AG04450 (cell line): ENCODE measurements at regions of chr19 and their contacts with region 1.

Region 1: GRCh38 chr19:48492925-48493717 is 18.5 kb downstream of the LMTK3 start:
- DNase-seq: peak; percentile 91
- H3K4me3 ChIP-seq: peak overlapping the region; percentile 69
- H3K27ac ChIP-seq: peak overlapping the region; percentile 31
- H3K27me3 ChIP-seq: peaks cover 4% of the 10 kb centered on the region
- CTCF ChIP-seq: no peak

Region 2: GRCh38 chr19:48469289-48469881 is 23.7 kb before region 1 on chr19 and contains the start of gene CYTH2:
- CTCF ChIA-PET with region 1: interaction called, 12 read pairs
- POLR2A ChIA-PET with region 1: interaction called, 3 read pairs
- DNase-seq: peak; percentile 20
- H3K4me3 ChIP-seq: peak within 1 kb of the TSS; percentile 86
- H3K27ac ChIP-seq: peak within 1 kb of the TSS; percentile 97
- H3K27me3 ChIP-seq: no peaks in the 10 kb centered on the region
- CTCF ChIP-seq: no peak
- polyA plus RNA-seq, gene CYTH2: 29.3 and 35.6 TPM in 2 replicates

Region 3: DNA sequence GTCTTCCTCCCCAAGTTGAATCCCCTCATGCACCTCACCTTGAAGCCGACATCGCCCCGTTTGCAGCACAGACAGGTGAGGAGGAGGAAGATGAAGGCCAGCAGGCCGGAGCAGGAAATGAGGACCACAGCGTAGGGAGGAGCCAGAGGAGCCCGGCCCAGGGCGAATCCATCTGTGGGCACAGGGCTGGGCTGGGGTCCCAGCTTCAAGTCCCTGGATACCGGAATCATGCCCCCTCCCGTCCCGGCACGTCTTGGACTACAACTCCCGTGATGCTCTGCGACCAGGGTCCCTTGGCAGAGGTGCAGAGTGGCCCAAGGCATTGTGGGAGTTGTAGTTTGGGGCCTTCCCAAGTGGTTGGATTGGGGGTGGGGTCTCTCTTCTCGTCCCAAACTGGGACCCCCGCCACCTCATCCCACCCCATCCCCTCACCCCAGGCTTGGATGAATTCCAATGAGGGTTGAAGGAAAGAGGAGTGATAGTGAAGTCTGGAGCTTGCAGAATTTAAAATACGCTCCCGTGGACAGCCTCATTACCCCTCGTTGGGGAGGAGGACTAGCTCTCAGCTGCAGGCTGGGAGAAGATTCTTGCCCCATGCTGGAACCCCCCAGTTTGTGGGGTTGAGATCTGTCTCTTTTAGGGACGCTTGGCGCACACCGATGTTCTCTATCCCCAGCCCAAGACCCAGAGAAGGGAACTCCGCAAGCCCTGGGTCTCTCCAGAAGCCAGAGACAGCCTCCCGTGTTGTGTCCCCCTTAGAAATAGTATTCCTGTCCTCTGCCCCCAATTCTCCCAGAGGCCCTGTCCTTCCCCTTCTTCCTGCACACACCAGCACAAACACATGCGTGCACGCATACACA is 17.5 kb after region 1 on chr19:
- CTCF ChIA-PET with region 1: interaction called, 10 read pairs
- POLR2A ChIA-PET with region 1: no interaction called
- DNase-seq: no peak
- H3K4me3 ChIP-seq: peak overlapping the region; percentile 39
- H3K27ac ChIP-seq: no peak overlapping the region
- H3K27me3 ChIP-seq: peaks cover 36% of the 10 kb centered on the region
- CTCF ChIP-seq: no peak

Region 4: GRCh38 chr19:48608798-48609263 is 115.7 kb after region 1 on chr19:
- CTCF ChIA-PET with region 1: interaction called, 13 read pairs
- POLR2A ChIA-PET with region 1: interaction called, 15 read pairs
- DNase-seq: no peak
- H3K4me3 ChIP-seq: no peak overlapping the region
- H3K27ac ChIP-seq: no peak overlapping the region
- H3K27me3 ChIP-seq: no peaks in the 10 kb centered on the region
- CTCF ChIP-seq: peak; percentile 62

Region 5: DNA sequence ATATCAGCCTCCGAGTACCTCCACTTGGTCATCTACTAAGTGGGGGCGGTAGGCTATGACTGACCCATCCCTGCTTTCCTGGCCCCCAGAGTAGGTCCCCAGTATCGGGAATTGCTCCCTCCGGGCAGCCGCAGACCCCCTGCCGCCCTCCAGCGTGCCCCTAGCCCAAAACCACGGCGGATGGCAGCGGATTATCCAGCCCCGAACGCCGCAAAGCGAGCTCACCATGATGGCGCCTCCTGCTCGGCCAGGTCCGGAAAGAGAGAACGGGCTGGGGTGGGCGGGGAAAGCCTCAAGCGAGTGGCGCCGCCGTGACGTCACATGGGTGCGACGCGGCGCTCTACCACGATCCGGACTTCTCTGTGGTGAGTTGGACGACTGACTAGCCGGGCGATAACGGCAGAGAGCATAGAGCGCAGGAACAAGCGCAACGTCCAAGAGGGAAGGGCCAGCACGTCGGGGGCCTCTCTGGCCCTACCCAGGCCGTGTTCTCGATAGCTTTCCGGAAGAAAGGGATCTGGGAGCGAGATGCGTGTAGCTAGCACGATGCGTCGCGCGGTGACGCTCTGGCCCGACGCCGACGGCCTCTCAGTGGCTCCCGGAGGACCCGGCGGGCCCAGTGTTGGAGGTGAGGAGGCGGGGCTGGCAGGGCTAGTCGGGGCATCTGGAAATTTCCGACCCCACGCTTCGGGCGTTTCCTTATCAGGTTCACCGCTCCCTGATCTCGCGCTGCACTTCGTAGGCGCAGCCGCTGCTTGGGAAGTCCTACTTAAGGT is 126.0 kb after region 1 on chr19 and contains the starts of genes RPL18 and SPHK2:
- CTCF ChIA-PET with region 1: no interaction called
- POLR2A ChIA-PET with region 1: interaction called, 11 read pairs
- DNase-seq: peak; percentile 100
- H3K4me3 ChIP-seq: peak within 1 kb of the TSS; percentile 97
- H3K27ac ChIP-seq: peak within 1 kb of the TSS; percentile 86
- H3K27me3 ChIP-seq: no peaks in the 10 kb centered on the region
- CTCF ChIP-seq: no peak
- polyA plus RNA-seq, gene RPL18: 1,020 and 1,259 TPM in 2 replicates
- polyA plus RNA-seq, gene SPHK2: 4.6 and 6.1 TPM in 2 replicates